ENCODE measurements at regions of chr1 and their contacts with region 1.

Region 1: DNA sequence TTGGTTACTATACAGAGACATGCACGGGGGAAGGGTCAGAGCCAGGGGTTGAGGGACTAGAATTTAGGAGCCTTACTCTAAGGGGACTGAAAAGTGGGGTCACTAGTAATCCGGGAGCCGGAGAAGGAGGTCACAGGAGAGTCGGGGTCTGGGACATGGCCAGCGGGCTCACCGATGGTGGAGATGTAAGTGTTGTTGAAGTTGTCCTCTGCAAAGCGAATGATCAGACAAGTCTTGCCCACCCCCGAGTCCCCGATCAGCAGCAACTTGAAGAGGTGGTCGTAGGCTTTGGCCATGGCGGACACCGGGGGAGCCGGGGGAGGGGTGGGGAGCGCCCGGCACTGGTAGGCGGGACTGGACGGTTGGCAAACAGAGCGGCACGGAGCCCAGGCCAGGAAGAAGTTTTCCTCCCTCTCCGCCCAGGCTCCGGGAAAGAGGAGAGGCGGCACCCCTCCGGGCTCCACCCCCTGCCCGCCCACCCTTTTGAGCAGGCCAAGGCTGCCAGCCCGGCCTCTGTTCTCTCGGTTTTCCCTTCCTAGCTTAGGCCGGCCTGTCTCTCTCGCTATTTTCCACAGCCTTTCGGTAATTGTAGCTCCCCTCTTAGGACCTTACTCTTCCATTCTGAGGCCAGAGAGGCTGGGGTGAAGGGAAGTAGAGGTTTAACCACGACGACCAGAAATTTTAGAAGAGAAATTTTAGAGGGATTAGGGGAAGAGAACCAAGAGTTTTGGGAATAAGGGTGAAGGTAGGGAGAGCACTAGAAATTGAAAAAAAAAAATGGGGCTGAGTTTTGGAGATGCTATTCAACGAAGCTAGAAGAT is at the start of gene RAB13:
- DNase-seq: peak in 40 of 42 donors; percentile 45 to 87 (median 69)

Region 2: GRCh38 chr1:153459655-153460054 is 526.5 kb before region 1 on chr1:
- intact Hi-C with region 1: no loop called
- DNase-seq: no peak

Region 3: GRCh38 chr1:153510984-153511410 is 475.2 kb before region 1 on chr1:
- intact Hi-C with region 1: loop called (anchors 10 kb)
- DNase-seq: peak; percentile 57 to 90 (median 78)

Region 4: DNA sequence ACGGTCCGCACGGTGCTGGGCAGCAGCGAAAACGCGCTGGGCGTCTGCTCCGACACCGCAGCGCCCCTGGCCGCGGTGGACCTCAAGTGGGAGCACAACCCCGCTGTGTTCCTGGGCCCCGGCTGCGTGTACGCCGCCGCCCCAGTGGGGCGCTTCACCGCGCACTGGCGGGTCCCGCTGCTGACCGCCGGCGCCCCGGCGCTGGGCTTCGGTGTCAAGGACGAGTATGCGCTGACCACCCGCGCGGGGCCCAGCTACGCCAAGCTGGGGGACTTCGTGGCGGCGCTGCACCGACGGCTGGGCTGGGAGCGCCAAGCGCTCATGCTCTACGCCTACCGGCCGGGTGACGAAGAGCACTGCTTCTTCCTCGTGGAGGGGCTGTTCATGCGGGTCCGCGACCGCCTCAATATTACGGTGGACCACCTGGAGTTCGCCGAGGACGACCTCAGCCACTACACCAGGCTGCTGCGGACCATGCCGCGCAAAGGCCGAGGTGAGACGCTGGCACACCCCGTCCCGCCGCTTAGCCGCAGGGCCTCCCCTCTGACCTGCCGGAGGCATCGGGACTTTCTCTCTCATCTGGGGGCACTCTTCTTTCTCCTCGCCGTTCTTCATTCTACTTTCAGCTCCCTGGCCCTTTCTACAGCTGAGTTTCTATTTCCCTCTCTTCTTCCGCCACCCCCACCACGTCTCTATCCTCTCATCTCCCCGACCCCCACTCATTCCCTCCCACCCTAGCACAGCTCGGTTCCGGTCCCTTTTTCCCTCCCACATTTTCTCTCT is 306.6 kb before region 1 on chr1:
- intact Hi-C with region 1: loop called (anchors 5 kb)
- DNase-seq: peak in 1 of 42 donors; percentile 31

Region 5: GRCh38 chr1:153796791-153797659 is 189.1 kb before region 1 on chr1:
- intact Hi-C with region 1: loop called (anchors 5 kb)
- DNase-seq: peak; percentile 50 to 94 (median 80)

Region 6: DNA sequence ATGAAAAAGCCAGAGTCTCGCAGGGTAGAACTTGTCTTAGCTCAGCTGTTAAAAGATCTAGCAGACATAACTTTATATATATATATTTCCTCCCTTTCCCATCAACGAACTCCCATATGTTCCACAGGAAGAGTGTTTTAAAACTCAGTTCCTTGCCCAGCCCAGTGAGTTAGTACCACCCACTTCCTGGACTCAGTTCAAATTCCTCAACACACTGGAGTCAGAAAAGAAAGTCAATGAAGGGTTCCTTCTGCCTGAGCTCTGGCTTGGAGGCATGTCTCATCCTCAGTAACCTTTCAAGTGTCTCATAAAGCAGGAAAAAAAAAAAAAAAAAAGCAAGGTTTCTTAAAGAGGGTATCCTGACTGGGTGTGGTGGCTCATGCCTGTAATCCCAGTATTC is 190.2 kb after region 1 on chr1:
- intact Hi-C with region 1: no loop called
- DNase-seq: peak in 2 of 42 donors; percentile 13 to 43

Measured in head of caudate nucleus (tissue), 42 donors.